ENCODE measurements at regions of chr4 and their contacts with region 1.

Region 1: GRCh38 chr4:21790438-21791029 is 158.0 kb downstream of the KCNIP4 start:
- DNase-seq: peak; percentile 51
- H3K4me3 ChIP-seq: no peak overlapping the region
- H3K27ac ChIP-seq: no peak overlapping the region
- H3K4me1 ChIP-seq: no peaks in the 10 kb centered on the region
- H3K27me3 ChIP-seq: peaks cover 0 to 2% of the 10 kb centered on the region in 2 experiments
- CTCF ChIP-seq: peak; percentile 14 to 26
- POLR2A ChIP-seq: no peak

Region 2: DNA sequence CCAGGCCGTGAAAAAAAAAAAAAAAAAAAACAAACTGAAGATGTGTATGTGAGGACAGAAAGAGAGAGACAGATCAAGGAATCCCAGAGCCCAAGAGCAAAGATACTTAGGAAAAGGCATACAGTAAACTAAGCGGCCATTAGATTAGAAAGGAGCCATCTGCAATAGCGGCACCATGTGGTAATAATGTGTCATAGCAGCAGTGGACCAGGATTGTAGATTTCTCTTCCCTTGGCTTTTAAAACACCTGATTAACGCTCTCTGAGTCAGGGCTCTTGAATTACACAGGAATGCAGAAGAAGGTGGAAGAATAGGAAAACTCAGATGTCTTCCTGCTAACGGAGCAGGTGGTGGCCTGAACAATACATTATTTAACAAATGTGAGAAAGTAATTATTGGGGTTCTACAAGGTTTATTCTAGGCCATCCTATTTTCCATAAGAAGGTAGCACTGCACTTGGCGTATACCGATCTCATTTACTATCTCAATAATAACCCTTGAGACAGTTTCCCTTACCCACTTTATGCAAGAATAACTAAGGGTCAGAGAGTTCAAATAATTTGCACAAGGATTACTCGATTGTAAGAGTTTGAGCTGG is 24.6 kb before region 1 on chr4:
- CTCF ChIA-PET with region 1: interaction called, 24 read pairs
- POLR2A ChIA-PET with region 1: no interaction called
- dilution Hi-C with region 1: no loop called
- intact Hi-C with region 1: no loop called
- DNase-seq: peak; percentile 75
- H3K4me3 ChIP-seq: no peak overlapping the region
- H3K27ac ChIP-seq: no peak overlapping the region
- H3K4me1 ChIP-seq: peaks cover 12% of the 10 kb centered on the region
- H3K27me3 ChIP-seq: peaks cover 33 to 50% of the 10 kb centered on the region in 2 experiments
- CTCF ChIP-seq: peak; percentile 74 to 78
- POLR2A ChIP-seq: no peak

Region 3: GRCh38 chr4:21811565-21811964 is 21.0 kb after region 1 on chr4:
- CTCF ChIA-PET with region 1: interaction called, 10 read pairs
- POLR2A ChIA-PET with region 1: no interaction called
- dilution Hi-C with region 1: no loop called
- intact Hi-C with region 1: no loop called
- DNase-seq: peak; percentile 22
- H3K4me3 ChIP-seq: no peak overlapping the region
- H3K27ac ChIP-seq: no peak overlapping the region
- H3K4me1 ChIP-seq: peaks cover 6% of the 10 kb centered on the region
- H3K27me3 ChIP-seq: no peaks in the 10 kb centered on the region
- CTCF ChIP-seq: no peak
- POLR2A ChIP-seq: no peak

Region 4: DNA sequence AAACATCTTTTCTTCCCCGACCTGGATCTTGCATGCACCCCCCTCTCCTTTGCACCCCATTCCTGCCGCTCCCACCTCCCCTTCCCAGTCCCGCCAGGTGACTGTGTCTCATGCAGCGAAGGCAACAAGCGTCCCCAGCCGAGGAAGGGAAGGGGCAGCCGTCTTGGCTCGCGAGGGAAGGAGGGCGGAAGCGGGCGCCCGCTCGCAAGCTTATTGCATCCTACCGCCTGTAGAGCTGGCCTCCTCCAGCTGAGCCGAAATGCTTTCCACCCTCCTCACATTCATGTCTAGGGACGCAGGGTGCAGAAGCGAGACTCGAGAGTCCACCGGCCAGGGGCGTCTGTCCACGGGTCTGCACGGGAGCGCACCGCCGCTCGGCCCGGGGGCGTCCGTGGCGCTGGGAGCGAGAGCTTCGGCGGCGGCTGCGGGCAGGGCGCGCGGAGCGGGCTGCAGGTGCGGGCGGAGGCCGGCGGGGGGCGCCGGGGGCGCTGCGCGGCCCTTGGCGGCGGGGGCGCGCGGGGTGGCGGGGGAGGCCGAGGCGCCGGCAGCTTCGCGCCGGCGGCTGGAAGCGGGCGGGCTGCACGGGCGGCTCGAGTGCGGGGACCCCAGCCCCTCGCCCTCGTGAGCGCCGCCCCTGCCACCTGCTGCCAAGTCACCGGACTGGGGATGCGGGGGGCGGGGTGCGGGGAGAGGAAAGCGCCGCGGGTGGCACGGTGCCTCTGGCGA is 158.0 kb after region 1 on chr4 and contains the start of gene KCNIP4:
- CTCF ChIA-PET with region 1: no interaction called
- POLR2A ChIA-PET with region 1: no interaction called
- dilution Hi-C with region 1: no loop called
- intact Hi-C with region 1: loop called (anchors 1 kb)
- DNase-seq: no peak
- H3K4me3 ChIP-seq: no peak within 1 kb of the TSS
- H3K27ac ChIP-seq: no peak within 1 kb of the TSS
- H3K4me1 ChIP-seq: no peaks in the 10 kb centered on the region
- H3K27me3 ChIP-seq: peaks cover 8 to 19% of the 10 kb centered on the region in 2 experiments
- CTCF ChIP-seq: no peak
- POLR2A ChIP-seq: no peak
- total RNA-seq, gene KCNIP4: not detected in 2 replicates

Region 5: GRCh38 chr4:22384154-22384553 is 593.6 kb after region 1 on chr4:
- CTCF ChIA-PET with region 1: interaction called, 712 read pairs
- POLR2A ChIA-PET with region 1: interaction called, 4 read pairs
- dilution Hi-C with region 1: no loop called
- intact Hi-C with region 1: loop called (anchors 1 kb)
- DNase-seq: no peak
- H3K4me3 ChIP-seq: no peak overlapping the region
- H3K27ac ChIP-seq: no peak overlapping the region
- H3K4me1 ChIP-seq: peaks cover 18% of the 10 kb centered on the region
- H3K27me3 ChIP-seq: no peaks in the 10 kb centered on the region
- CTCF ChIP-seq: no peak
- POLR2A ChIP-seq: no peak

Region 6: GRCh38 chr4:22434895-22435294 is 644.4 kb after region 1 on chr4:
- CTCF ChIA-PET with region 1: interaction called, 22 read pairs
- POLR2A ChIA-PET with region 1: no interaction called
- dilution Hi-C with region 1: no loop called
- intact Hi-C with region 1: loop called (anchors 1 kb)
- DNase-seq: peak; percentile 61
- H3K4me3 ChIP-seq: no peak overlapping the region
- H3K27ac ChIP-seq: no peak overlapping the region
- H3K4me1 ChIP-seq: no peaks in the 10 kb centered on the region
- H3K27me3 ChIP-seq: no peaks in the 10 kb centered on the region
- CTCF ChIP-seq: peak; percentile 21 to 57
- POLR2A ChIP-seq: no peak

Region 7: DNA sequence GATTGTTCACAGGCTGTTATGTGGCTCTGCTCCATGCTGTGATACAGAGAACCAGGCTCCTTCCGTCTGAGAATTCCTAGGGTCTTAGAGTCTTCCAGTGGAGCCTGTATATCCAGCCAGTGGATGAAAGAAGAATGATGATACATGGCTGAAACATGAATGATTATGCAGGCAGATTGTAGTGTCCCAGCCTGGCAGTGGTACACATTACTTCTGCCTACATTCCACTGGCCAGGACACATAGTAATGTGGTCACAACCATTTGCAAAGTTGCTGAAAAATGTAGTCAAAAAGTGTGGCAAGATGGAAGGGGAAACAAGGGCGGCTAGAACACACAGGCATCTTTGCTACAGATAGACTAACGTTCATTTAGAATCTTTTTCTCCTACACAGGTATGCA is 897.7 kb after region 1 on chr4:
- CTCF ChIA-PET with region 1: interaction called, 66 read pairs
- POLR2A ChIA-PET with region 1: no interaction called
- dilution Hi-C with region 1: no loop called
- intact Hi-C with region 1: loop called (anchors 1 kb)
- DNase-seq: no peak
- H3K4me3 ChIP-seq: no peak overlapping the region
- H3K27ac ChIP-seq: no peak overlapping the region
- H3K4me1 ChIP-seq: no peaks in the 10 kb centered on the region
- H3K27me3 ChIP-seq: no peaks in the 10 kb centered on the region
- CTCF ChIP-seq: no peak
- POLR2A ChIP-seq: no peak

Measured in endothelial cell of umbilical vein (primary cell).